PC-9 (cell line): ENCODE measurements at regions of chr17 and their contacts with region 1.

Region 1: DNA sequence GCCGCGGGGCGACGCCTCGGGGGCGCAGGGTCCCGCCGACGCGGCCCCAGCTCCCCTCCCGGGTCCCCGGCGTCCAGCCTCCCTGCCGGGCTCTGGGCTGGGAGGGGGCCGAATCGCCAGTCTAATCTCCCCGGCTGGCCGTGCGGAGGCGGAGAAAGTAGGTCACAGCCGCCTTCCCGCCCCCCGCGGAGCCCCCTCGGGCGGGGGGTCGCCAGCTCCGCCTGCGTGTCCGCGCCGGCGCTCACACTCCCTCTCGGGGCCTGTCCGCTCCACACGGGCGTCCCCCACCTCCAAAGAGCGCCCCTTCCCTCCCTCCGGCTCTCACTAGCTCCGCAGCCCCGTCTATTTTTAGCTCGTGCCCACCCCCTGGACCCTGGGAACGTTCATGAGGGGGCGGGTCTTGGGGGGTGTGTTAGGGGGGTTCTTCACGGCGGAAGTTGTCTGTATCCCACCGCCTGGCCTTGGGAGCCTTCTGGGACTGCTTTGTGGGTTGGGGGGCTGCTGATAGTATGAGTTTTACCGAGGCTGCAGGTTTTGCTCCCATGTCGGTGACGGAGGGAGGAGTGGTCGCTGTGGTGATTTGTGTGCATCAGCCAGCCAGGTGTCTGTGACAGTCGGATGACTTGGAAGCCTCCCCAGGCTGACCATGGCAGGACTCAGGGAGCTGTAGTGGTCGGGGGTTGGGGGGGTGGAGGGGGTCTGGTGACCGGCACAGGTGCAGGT is 1.1 kb downstream of the ATP1B2 start:
- DNase-seq: no peak
- H3K4me3 ChIP-seq: no peak overlapping the region
- H3K27ac ChIP-seq: no peak overlapping the region
- H3K4me1 ChIP-seq: no peaks in the 10 kb centered on the region
- H3K27me3 ChIP-seq: peaks cover 11% of the 10 kb centered on the region
- CTCF ChIP-seq: no peak

Region 2: DNA sequence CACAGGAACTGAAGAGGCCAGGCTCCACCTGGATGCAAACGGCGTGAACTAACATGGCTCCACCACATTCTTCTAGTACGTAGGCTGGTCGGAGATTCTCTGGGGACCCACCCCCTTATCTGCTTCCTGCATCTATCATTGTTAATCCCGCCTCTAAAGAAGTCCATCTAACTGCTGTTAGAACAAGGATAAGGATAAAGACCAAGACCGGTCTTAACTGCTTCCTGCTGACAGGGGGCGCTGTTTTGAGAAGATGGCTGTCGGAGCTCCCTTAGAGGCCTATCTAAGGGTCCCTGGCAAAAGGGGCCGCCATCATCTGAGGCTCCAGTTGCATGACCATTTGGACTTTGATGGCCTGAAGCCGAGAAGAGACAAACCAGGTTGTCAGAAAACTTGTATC is 128.8 kb before region 1 on chr17:
- CTCF ChIA-PET with region 1: no interaction called
- POLR2A ChIA-PET with region 1: no interaction called
- intact Hi-C with region 1: no loop called
- DNase-seq: no peak
- H3K4me3 ChIP-seq: no peak overlapping the region
- H3K27ac ChIP-seq: no peak overlapping the region
- H3K4me1 ChIP-seq: no peaks in the 10 kb centered on the region
- H3K27me3 ChIP-seq: no peaks in the 10 kb centered on the region
- CTCF ChIP-seq: peak; percentile 52

Region 3: DNA sequence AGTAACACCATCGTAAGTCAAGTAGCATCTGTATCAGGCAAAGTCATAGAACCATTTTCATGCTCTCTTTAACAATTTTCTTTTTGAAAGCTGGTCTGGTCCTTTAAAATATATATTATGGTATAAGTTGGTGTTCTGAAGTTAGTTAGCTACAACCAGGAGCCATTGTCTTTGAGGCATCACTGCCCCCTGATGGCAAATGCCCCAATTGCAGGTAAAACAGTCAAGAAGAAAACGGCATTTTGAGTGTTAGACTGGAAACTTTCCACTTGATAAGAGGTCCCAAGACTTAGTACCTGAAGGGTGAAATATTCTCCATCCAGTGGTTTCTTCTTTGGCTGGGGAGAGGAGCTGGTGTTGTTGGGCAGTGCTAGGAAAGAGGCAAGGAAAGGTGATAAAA is 21.4 kb after region 1 on chr17:
- CTCF ChIA-PET with region 1: no interaction called
- POLR2A ChIA-PET with region 1: no interaction called
- intact Hi-C with region 1: no loop called
- DNase-seq: no peak
- H3K4me3 ChIP-seq: no peak overlapping the region
- H3K27ac ChIP-seq: no peak overlapping the region
- H3K4me1 ChIP-seq: no peaks in the 10 kb centered on the region
- H3K27me3 ChIP-seq: no peaks in the 10 kb centered on the region
- CTCF ChIP-seq: peak; percentile 59

Region 4: DNA sequence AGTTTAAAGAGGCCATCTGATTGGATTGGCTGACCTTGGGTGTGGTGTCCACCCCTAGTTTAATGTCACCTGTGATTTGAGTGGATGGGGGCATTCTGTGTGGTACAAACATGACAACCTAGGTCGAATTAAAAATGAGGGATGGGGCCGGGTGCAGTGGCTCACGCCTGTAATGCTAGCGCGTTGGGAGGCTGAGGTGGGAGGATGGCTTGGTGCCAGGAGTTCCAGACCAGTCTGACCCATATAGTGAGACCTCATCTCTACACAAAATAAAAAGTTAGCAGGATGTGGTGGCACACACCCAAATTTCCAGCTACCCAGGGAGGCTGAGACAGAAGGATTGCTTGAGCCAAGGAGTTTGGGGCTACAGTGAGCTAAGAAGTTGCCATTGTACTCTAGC is 294.6 kb after region 1 on chr17:
- CTCF ChIA-PET with region 1: interaction called, 10 read pairs
- POLR2A ChIA-PET with region 1: no interaction called
- intact Hi-C with region 1: no loop called
- DNase-seq: no peak
- H3K4me3 ChIP-seq: no peak overlapping the region
- H3K27ac ChIP-seq: no peak overlapping the region
- H3K4me1 ChIP-seq: no peaks in the 10 kb centered on the region
- H3K27me3 ChIP-seq: no peaks in the 10 kb centered on the region
- CTCF ChIP-seq: no peak

Region 5: DNA sequence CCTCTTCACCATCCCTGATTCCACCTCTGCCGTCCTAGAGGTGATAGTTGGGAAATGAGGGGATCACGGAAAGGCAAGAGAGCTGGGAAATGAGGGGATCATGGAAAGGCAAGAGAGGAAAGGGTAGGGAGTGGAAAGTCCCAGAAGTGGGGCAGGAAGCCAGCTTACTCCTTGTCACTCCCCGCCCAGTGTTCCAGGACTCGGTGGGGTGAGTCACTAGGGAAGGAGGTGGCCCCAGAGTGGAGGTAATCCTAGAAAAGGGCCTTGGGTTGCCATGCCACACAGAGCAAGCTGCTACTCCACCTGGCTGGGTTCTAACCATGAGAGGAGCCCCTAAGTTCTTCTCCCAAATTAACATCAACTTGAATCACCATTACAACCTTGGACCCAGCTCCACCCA is 451.7 kb after region 1 on chr17:
- CTCF ChIA-PET with region 1: no interaction called
- POLR2A ChIA-PET with region 1: no interaction called
- intact Hi-C with region 1: no loop called
- DNase-seq: no peak
- H3K4me3 ChIP-seq: no peak overlapping the region
- H3K27ac ChIP-seq: no peak overlapping the region
- H3K4me1 ChIP-seq: no peaks in the 10 kb centered on the region
- H3K27me3 ChIP-seq: no peaks in the 10 kb centered on the region
- CTCF ChIP-seq: no peak